Transverse colon (tissue), 4 donors: ENCODE measurements at regions of chr19 and their contacts with region 1.

Region 1: GRCh38 chr19:6358003-6358402 is 3.3 kb upstream of the CLPP start:
- DNase-seq: no peak
- H3K4me3 ChIP-seq: no peak overlapping the region
- H3K27ac ChIP-seq: no peak overlapping the region
- H3K4me1 ChIP-seq: peaks cover 5 to 11% (median 10%) of the 10 kb centered on the region in 4 donors
- H3K27me3 ChIP-seq: no peaks in the 10 kb centered on the region
- CTCF ChIP-seq: no peak
- EP300 ChIP-seq: no peak
- POLR2A ChIP-seq: no peak

Region 2: DNA sequence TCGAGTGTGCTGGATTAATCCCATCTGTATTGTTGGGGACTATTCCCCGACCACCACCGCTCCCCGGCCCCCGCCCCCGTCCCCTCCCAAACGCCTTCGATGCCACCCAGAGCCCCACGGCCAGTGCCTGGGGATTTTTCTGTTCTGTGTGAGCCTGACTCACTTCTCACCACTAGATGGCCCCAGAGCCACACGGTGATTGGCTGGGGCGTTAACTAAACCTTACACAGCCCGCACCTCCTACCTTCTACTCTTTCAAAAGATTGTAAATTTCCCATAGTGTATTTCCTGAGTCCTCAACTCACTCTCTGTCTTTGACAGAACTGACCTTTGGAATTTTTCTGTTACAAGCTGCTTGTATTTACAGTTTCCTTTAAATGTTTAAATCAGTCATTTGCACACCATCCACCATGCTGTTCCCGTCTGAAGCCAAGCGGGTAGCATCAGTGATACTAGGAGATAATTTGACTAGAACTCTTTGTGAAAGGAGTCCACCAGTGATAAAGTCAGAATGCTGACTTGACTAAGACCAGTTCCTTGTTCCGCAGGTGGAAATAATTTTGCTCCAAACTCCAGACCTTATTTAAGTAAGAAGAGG is 309.1 kb before region 1 on chr19:
- in situ Hi-C with region 1: no loop called
- intact Hi-C with region 1: no loop called
- DNase-seq: peak; percentile 83
- H3K4me3 ChIP-seq: no peak overlapping the region
- H3K27ac ChIP-seq: peak overlapping the region in 1 of 4 donors; percentile 35
- H3K4me1 ChIP-seq: peaks cover 0 to 10% (median 10%) of the 10 kb centered on the region in 4 donors
- H3K27me3 ChIP-seq: no peaks in the 10 kb centered on the region
- CTCF ChIP-seq: peak; percentile 86 to 92 (median 88)
- EP300 ChIP-seq: no peak
- POLR2A ChIP-seq: no peak

Region 3: DNA sequence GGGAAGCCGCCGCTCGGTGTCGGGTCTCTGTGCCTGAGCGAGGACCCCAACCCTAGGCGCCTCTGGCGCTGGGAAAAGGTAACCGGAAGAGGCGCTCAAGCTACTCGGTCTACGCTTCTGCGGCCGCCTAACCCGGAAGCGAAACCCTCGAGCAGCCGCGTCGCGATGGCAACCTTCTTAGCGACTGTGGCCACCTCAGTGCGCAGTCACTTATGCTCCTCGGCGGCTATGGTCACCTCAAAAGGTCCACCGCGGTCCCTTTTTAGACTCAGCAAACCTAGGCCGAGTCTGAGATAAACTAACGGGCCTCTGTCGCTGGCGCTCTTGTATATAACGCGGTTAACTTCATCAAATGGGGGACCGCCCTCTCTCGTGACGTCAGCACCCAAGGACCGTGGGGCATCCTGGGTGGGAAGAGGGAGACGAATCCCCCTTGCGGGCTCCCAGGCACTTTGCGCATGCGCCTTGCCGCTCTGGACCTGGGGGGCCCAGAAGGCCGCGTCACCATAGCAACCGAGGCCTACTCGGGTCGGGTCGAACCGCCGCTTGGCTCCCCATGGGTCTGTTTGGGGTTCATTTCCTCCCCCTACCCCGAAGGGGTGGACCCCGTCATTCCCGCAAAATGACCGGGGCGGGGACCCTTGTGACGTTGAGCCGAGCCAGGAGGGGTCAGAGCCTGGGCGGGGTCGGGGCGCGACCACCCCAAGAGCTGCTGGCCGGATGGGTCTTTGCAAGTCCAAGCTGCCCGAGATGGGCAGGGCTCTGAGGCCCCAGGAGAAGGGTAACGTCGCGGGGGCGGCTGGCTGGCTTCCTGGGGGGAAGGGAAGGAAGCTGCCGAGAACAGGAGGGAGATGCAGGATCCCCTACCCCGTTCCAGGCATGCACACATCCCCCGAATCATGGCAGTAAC is 35.3 kb after region 1 on chr19 and contains the start of gene GTF2F1:
- in situ Hi-C with region 1: no loop called
- intact Hi-C with region 1: no loop called
- DNase-seq: peak; percentile 93
- H3K4me3 ChIP-seq: peak within 1 kb of the TSS; percentile 62 to 93 (median 82)
- H3K27ac ChIP-seq: peak within 1 kb of the TSS; percentile 89 to 98 (median 94)
- H3K4me1 ChIP-seq: peaks cover 5 to 18% (median 8%) of the 10 kb centered on the region in 4 donors
- H3K27me3 ChIP-seq: no peaks in the 10 kb centered on the region
- CTCF ChIP-seq: peak in 3 of 5 experiments; percentile 14 to 31 (median 17)
- EP300 ChIP-seq: no peak
- POLR2A ChIP-seq: peak; percentile 48
- total RNA-seq, gene GTF2F1: 42.2 to 166 (median 56.1) TPM

Region 4: GRCh38 chr19:7904074-7905020 is 1546.3 kb after region 1 on chr19:
- in situ Hi-C with region 1: no loop called
- intact Hi-C with region 1: loop called (anchors 5 kb)
- DNase-seq: peak; percentile 62
- H3K4me3 ChIP-seq: peak overlapping the region; percentile 45 to 92 (median 68)
- H3K27ac ChIP-seq: peak overlapping the region; percentile 86 to 91 (median 88)
- H3K4me1 ChIP-seq: peaks cover 18 to 32% (median 26%) of the 10 kb centered on the region in 4 donors
- H3K27me3 ChIP-seq: no peaks in the 10 kb centered on the region
- CTCF ChIP-seq: no peak
- EP300 ChIP-seq: no peak
- POLR2A ChIP-seq: no peak